ENCODE measurements at regions of chr11 and their contacts with region 1.

Region 1: DNA sequence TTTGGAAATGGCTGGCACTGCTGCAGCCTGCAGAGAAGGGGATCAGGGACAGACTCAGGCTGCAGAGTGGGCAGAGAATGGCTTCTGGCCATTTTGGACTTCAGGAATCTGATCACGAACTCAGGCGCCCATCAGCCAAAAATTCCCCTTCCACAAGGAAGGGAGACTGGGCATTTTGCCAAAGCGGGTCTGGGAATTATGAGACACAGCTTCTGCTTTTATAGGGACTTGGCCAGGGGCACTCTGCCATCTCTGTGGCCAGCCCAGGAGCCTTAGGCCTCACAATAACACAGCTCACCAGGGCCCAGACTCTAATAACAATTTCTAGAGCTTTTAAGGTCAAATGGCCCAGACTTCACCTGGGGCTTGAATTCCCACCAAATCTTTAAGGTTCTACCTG is 74.7 kb downstream of the CHST1 start:
- DNase-seq: peak; percentile 86 to 93
- ATAC-seq: peak; percentile 69
- H3K4me3 ChIP-seq: no peak overlapping the region
- H3K27ac ChIP-seq: no peak overlapping the region
- H3K4me1 ChIP-seq: peaks cover 0 to 4% of the 10 kb centered on the region in 2 donors
- H3K27me3 ChIP-seq: no peaks in the 10 kb centered on the region

Region 2: DNA sequence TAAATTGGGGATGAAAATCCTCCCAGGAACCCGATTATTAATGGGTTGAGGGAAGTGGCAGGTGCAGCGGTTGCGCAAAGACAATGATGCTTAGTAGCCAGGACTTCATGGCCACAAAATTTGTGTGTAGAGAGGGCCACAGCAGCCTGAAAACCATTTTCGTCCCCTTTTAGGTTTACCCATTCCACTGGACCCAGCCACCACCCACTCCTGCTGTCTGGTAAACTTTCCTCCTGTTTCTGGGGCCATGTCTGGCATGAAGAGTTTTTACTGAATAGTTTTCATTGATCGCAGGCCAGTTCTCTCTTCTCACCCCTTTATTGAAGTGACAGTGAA is 235.1 kb before region 1 on chr11:
- intact Hi-C with region 1: loop called in 1 of 2 experiments (anchors 1 kb)
- DNase-seq: no peak
- ATAC-seq: peak; percentile 43
- H3K4me3 ChIP-seq: peak overlapping the region; percentile 41 to 59
- H3K27ac ChIP-seq: no peak overlapping the region
- H3K4me1 ChIP-seq: no peaks in the 10 kb centered on the region
- H3K27me3 ChIP-seq: no peaks in the 10 kb centered on the region

Region 3: GRCh38 chr11:45532546-45532945 is 58.2 kb before region 1 on chr11:
- intact Hi-C with region 1: no loop called
- DNase-seq: no peak
- ATAC-seq: no peak
- H3K4me3 ChIP-seq: no peak overlapping the region
- H3K27ac ChIP-seq: no peak overlapping the region
- H3K4me1 ChIP-seq: no peaks in the 10 kb centered on the region
- H3K27me3 ChIP-seq: no peaks in the 10 kb centered on the region

Region 4: DNA sequence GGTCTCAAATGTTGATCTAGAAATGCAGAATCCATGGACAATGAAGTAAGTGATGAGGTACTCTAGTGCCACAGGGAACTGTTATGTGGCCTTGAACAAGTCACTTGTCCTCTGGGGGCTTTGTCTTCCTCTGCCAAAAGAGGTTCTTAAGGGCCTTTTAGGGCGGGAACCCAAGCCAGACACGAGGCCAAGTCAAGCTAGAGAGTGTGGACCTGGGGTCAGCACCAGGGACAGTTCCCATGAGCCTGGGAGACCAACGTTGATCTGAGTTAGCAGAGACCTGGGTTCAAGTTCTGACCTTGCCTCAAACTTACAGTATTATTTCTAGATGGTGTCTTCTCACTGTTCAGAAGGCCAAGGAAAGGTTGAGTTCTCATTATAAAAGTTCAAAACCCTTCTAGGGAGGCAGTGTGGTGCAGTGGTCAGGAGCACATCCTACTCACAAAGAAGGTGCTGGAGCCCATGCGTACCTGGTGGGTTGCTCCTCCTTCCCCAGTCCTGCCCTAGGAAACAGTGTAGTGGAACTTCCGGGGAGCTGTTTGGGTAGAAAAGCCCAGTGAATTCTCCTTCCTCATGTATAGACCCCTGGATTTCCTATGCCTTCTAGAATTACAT is 46.8 kb before region 1 on chr11:
- intact Hi-C with region 1: no loop called
- DNase-seq: no peak
- ATAC-seq: no peak
- H3K4me3 ChIP-seq: no peak overlapping the region
- H3K27ac ChIP-seq: no peak overlapping the region
- H3K4me1 ChIP-seq: no peaks in the 10 kb centered on the region
- H3K27me3 ChIP-seq: no peaks in the 10 kb centered on the region